Activated naive CD4-positive, alpha-beta T cell treated with anti-CD3 and anti-CD28 coated beads for 36 hours (primary cell): ENCODE measurements at regions of chr2 and their contacts with region 1.

Region 1: GRCh38 chr2:36507408-36507812 is 90.6 kb downstream of the FEZ2 start:
- DNase-seq: peak; percentile 68
- H3K4me3 Mint-ChIP-seq: no peak overlapping the region
- H3K27ac Mint-ChIP-seq: no peak overlapping the region
- H3K4me1 Mint-ChIP-seq: no peaks in the 10 kb centered on the region
- H3K27me3 Mint-ChIP-seq: no peaks in the 10 kb centered on the region

Region 2: DNA sequence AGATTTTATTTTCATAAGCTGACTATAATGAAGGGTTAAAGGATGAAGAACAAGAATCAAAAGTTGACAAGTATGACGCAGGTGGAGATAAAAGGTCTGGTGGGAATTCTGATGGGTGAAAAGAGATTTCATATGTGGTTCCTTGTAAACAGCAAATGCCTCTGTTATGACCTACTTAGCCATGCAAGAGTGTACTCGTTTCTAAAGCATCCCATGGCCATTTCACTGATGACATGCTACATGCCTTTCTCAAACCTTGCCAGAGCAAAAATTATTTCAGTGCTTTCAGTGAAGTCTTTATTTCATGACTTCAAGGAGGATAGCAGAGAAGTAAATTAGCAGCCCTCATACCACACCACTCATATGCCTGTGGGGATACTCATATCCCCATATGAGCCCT is 18.8 kb after region 1 on chr2:
- CTCF ChIA-PET with region 1: no interaction called
- intact Hi-C with region 1: no loop called
- DNase-seq: no peak
- H3K4me3 Mint-ChIP-seq: no peak overlapping the region
- H3K27ac Mint-ChIP-seq: no peak overlapping the region
- H3K4me1 Mint-ChIP-seq: no peaks in the 10 kb centered on the region
- H3K27me3 Mint-ChIP-seq: no peaks in the 10 kb centered on the region

Region 3: GRCh38 chr2:36549165-36549574 is 41.8 kb after region 1 on chr2:
- CTCF ChIA-PET with region 1: no interaction called
- intact Hi-C with region 1: loop called (anchors 1 kb)
- DNase-seq: peak; percentile 14
- H3K4me3 Mint-ChIP-seq: peak overlapping the region; percentile 7
- H3K27ac Mint-ChIP-seq: no peak overlapping the region
- H3K4me1 Mint-ChIP-seq: peaks cover 10% of the 10 kb centered on the region
- H3K27me3 Mint-ChIP-seq: no peaks in the 10 kb centered on the region

Region 4: DNA sequence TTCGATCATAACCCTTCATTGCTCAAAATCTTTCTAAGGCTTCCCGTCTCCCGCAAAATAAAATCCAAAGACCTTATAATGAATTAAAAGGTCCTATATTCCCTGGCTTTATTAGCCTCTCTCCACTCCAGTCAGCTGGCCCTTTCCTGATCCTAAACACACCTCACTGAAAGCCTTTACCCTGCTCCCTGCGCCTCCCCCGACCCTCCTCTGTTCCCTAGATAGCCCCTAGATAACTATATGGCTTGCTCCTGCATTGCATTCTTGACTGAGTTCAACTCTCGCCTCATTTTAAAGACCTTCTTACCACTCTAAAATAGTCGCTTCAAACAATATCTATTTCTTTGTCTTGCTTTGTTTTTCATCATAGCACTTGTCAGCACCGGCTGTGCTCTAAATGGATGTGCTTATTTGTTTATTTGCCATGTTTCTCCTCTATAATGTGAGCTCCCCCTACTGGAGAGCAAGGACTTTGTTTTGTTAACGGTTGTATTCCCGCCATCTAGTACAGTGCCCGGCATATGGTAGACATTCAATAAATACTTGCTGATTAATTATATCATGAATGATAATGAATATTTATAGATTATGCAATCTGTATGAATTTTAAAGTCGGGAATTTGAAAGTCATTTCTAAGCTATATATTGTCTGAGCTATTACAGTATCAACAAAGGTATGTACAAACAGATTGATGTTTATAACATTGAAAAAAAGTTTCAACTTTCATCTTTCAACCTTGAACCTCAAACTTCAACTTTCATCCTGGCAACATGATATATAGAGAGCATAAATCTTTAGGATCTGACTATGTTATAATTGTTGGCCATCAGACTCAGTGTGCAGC is 156.7 kb after region 1 on chr2:
- CTCF ChIA-PET with region 1: no interaction called
- intact Hi-C with region 1: loop called (anchors 5 kb)
- DNase-seq: peak; percentile 22
- H3K4me3 Mint-ChIP-seq: no peak overlapping the region
- H3K27ac Mint-ChIP-seq: no peak overlapping the region
- H3K4me1 Mint-ChIP-seq: no peaks in the 10 kb centered on the region
- H3K27me3 Mint-ChIP-seq: peaks cover 2% of the 10 kb centered on the region